ENCODE measurements at regions of chr6 and their contacts with region 1.

Region 1: GRCh38 chr6:134317471-134318131 is at the start of gene SGK1:
- DNase-seq: peak in 9 of 10 donors; percentile 41 to 70 (median 67)
- H3K4me3 ChIP-seq: peak within 1 kb of the TSS; percentile 57 to 95 (median 79)
- H3K27ac ChIP-seq: peak within 1 kb of the TSS; percentile 87 to 99 (median 96)
- H3K27me3 ChIP-seq: no peaks in the 10 kb centered on the region
- CTCF ChIP-seq: peak in 23 of 56 donors; percentile 5 to 45 (median 23)
- total RNA-seq, gene SGK1: 31.4 to 701 (median 120) TPM

Region 2: GRCh38 chr6:133977983-133978895 is 339.4 kb before region 1 on chr6:
- intact Hi-C with region 1: no loop called
- DNase-seq: no peak
- H3K4me3 ChIP-seq: no peak overlapping the region
- H3K27ac ChIP-seq: peak overlapping the region in 30 of 59 donors; percentile 1 to 68 (median 30)
- H3K27me3 ChIP-seq: no peaks in the 10 kb centered on the region
- CTCF ChIP-seq: no peak

Region 3: DNA sequence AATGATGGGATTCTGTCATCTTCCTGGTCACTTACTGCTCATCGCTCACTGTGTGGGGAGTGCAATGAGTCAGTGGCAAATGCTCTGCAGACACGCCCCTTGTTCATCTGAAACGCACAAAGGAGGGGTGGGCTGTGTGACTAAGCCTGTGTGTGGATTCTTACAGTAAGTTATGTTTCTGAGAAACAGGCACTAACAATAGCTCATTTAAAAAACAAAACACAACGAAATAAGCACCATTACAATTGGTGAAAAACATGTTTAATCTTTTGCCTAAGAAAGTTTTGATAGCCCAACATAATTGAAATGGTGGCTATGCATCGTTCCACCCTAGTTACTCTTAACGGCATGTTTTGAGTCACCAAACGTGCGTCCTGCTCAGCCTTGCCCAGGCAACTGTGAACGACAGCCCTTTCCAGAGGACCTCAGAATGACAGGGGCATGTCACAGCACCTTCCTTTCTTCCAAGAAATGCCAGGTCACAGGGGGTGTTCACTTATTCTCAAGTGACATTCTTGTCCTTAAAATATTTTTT is 118.7 kb after region 1 on chr6:
- intact Hi-C with region 1: loop called in 1 of 2 experiments (anchors 5 kb)
- DNase-seq: peak in 9 of 10 donors; percentile 48 to 88 (median 79)
- H3K4me3 ChIP-seq: peak overlapping the region in 36 of 59 donors; percentile 0 to 50 (median 18)
- H3K27ac ChIP-seq: peak overlapping the region; percentile 22 to 98 (median 89)
- H3K27me3 ChIP-seq: no peaks in the 10 kb centered on the region
- CTCF ChIP-seq: peak in 4 of 56 donors; percentile 9 to 22 (median 18)

Region 4: DNA sequence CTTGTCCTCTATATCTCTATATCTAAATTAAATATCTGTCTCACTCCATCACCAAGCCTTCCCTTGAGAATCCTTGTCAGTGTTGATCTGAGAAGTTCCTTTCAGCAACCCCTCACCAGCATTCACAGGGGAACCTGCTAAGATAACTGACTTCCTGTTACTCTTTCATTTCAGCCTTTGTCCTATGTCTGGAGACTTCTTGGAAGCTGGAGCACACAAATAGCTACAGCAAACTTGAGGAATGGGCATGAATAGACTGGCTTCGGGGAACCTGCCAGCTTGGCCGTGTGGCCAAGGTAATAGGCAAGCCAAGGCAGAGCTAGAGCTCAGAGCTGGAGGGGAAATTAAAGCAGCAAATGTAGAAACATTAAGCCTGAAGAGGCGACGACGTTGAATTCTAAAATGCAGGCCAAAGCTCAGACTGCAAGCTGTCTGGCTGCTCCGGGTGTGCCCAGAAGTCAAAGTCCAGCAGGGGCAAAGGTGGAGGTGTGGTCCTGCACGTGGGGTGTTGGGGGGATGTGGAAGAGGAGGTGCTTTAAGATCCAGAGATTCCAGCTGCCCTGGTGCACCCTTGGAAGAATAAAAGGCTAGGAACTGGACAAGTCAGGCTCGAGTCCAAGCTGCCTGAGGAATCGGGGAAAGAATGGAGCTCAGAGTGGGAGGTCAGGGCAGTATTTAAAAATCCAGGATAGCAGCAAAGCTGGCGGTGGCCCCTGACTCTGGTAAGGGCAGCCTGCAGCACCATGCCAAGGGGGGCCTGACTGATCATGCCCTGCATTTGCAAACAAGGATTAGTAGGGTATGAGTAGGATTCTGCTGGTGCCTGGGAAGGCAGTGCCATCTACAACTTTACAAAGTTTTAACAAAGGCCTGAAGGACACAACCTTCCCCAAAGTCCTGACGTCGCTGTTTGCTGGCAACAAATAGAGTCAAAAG is 185.3 kb after region 1 on chr6:
- intact Hi-C with region 1: no loop called
- DNase-seq: peak in 2 of 10 donors; percentile 39 to 47
- H3K4me3 ChIP-seq: peak overlapping the region in 1 of 59 donors; percentile 2
- H3K27ac ChIP-seq: peak overlapping the region in 30 of 59 donors; percentile 3 to 70 (median 32)
- H3K27me3 ChIP-seq: no peaks in the 10 kb centered on the region
- CTCF ChIP-seq: no peak